Dorsolateral prefrontal cortex (tissue), 120 donors: ENCODE measurements at regions of chr16 and their contacts with region 1.

Region 1: GRCh38 chr16:1194665-1195392 is 30.2 kb downstream of the TPSG1 start:
- DNase-seq: peak in 1 of 10 donors; percentile 22
- H3K4me3 ChIP-seq: peak overlapping the region in 1 of 59 donors; percentile 21
- H3K27ac ChIP-seq: no peak overlapping the region
- H3K27me3 ChIP-seq: no peaks in the 10 kb centered on the region
- CTCF ChIP-seq: peak; percentile 47 to 92 (median 79)

Region 2: GRCh38 chr16:1105888-1106620 is 88.8 kb before region 1 on chr16:
- intact Hi-C with region 1: loop called (anchors 1 to 2 kb)
- DNase-seq: peak; percentile 57 to 85 (median 74)
- H3K4me3 ChIP-seq: no peak overlapping the region
- H3K27ac ChIP-seq: no peak overlapping the region
- H3K27me3 ChIP-seq: peaks cover 0 to 65% (median 22%) of the 10 kb centered on the region in 45 donors
- CTCF ChIP-seq: peak; percentile 48 to 93 (median 82)